ENCODE measurements at regions of chr1 and their contacts with region 1.

Region 1: GRCh38 chr1:26471498-26472319 is 531 bp upstream of the HMGN2 start:
- DNase-seq: peak in 1 of 2 donors; percentile 91
- H3K4me3 ChIP-seq: peak overlapping the region; percentile 94 to 99
- H3K27ac ChIP-seq: peak overlapping the region; percentile 100
- H3K4me1 ChIP-seq: peaks cover 52% of the 10 kb centered on the region
- H3K27me3 ChIP-seq: no peaks in the 10 kb centered on the region
- CTCF ChIP-seq: no peak
- POLR2A ChIP-seq: no peak

Region 2: DNA sequence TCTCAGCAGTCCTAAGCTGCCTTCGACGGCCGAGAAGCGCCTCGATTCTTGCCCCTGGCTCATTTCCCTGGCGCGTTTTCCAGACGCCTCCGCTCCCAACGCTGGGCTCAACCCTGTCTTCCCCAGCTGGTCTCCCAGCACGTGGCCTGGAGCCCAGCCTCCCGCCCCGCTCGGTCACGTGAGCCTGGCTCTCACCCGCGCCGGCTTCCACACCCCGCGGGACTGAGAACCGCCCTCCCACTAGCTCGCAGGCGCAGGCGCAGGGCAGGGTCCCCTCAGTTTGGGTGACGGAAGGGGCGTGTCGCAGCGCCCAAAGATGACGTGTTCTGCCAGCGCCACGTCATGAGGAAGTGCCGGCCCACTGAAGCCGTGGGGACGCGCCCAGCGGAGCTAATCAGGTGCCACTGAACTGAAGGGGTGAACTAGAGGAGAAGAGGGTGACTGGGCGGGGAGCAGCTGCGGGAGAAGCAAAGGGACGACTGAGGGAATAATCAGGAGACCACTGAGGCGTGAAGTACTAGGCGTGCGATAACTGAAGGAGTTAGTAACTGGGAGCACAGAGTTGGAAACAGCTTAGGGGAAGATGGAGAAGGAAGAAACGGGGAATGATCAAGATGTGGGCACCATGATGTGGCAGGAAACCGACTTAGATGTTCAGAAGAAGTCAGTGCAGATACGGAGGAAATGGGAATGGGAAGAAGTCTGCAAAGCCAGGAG is 39.6 kb before region 1 on chr1 and contains the start of gene DHDDS:
- intact Hi-C with region 1: loop called (anchors 2 kb)
- DNase-seq: peak; percentile 99
- H3K4me3 ChIP-seq: peak within 1 kb of the TSS; percentile 66 to 68
- H3K27ac ChIP-seq: peak within 1 kb of the TSS; percentile 70
- H3K4me1 ChIP-seq: peaks cover 31% of the 10 kb centered on the region
- H3K27me3 ChIP-seq: no peaks in the 10 kb centered on the region
- CTCF ChIP-seq: peak in 1 of 3 experiments; percentile 32
- POLR2A ChIP-seq: peak in 1 of 2 donors; percentile 55
- total RNA-seq, gene DHDDS: 24.8 TPM

Measured in vagina (tissue), 2 donors.